Caco-2 (cell line): ENCODE measurements at regions of chr1 and their contacts with region 1.

Region 1: GRCh38 chr1:53025034-53025768 is 36.8 kb upstream of the PODN start:
- DNase-seq: peak; percentile 31 to 52
- H3K4me3 ChIP-seq: no peak overlapping the region
- H3K4me3 Mint-ChIP-seq: no peak overlapping the region
- H3K27ac Mint-ChIP-seq: no peak overlapping the region
- H3K4me1 ChIP-seq: no peaks in the 10 kb centered on the region
- H3K4me1 Mint-ChIP-seq: no peaks in the 10 kb centered on the region
- H3K27me3 ChIP-seq: no peaks in the 10 kb centered on the region
- H3K27me3 Mint-ChIP-seq: no peaks in the 10 kb centered on the region
- CTCF ChIP-seq: no peak

Region 2: GRCh38 chr1:52970149-52970548 is 55.1 kb before region 1 on chr1:
- CTCF ChIA-PET with region 1: no interaction called
- POLR2A ChIA-PET with region 1: no interaction called
- intact Hi-C with region 1: no loop called
- DNase-seq: peak in 1 of 2 experiments; percentile 20
- H3K4me3 ChIP-seq: no peak overlapping the region
- H3K4me3 Mint-ChIP-seq: no peak overlapping the region
- H3K27ac Mint-ChIP-seq: no peak overlapping the region
- H3K4me1 ChIP-seq: peaks cover 14% of the 10 kb centered on the region
- H3K4me1 Mint-ChIP-seq: peaks cover 14% of the 10 kb centered on the region
- H3K27me3 ChIP-seq: no peaks in the 10 kb centered on the region
- H3K27me3 Mint-ChIP-seq: no peaks in the 10 kb centered on the region
- CTCF ChIP-seq: peak in 1 of 2 experiments; percentile 18

Region 3: DNA sequence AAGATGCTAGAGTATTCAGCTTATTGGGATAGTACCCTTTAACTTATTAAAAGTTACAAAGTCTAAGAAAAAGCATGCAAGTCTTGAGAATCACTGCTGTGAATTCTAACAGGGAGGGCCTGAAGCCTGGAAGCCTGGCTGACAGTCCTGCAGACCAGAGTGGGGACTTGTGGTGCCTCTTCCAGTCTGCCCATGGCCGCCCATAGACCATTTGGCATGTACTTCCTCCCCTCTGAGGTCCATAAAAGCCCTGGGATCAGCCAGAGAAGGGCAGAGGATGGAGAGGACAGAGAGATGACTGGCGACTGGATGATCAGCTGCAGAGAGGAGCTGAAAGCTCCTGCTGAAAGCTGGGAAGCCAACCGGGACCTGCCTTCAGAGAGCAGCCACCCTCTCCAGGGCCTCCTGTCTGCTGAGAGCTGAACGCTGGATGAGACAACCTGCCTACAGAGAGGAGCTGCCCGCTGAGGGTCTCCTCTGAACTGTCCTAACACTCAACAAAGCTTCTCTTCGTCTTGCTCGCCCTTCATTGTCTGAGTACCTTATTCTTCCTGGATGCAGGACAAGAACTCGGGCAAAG is 129.7 kb after region 1 on chr1:
- CTCF ChIA-PET with region 1: no interaction called
- POLR2A ChIA-PET with region 1: interaction called, 10 read pairs
- intact Hi-C with region 1: no loop called
- DNase-seq: no peak
- H3K4me3 ChIP-seq: no peak overlapping the region
- H3K4me3 Mint-ChIP-seq: no peak overlapping the region
- H3K27ac Mint-ChIP-seq: no peak overlapping the region
- H3K4me1 ChIP-seq: no peaks in the 10 kb centered on the region
- H3K4me1 Mint-ChIP-seq: no peaks in the 10 kb centered on the region
- H3K27me3 ChIP-seq: no peaks in the 10 kb centered on the region
- H3K27me3 Mint-ChIP-seq: no peaks in the 10 kb centered on the region
- CTCF ChIP-seq: no peak